HAP-1 (cell line): ENCODE measurements at regions of chr2 and their contacts with region 1.

Region 1: DNA sequence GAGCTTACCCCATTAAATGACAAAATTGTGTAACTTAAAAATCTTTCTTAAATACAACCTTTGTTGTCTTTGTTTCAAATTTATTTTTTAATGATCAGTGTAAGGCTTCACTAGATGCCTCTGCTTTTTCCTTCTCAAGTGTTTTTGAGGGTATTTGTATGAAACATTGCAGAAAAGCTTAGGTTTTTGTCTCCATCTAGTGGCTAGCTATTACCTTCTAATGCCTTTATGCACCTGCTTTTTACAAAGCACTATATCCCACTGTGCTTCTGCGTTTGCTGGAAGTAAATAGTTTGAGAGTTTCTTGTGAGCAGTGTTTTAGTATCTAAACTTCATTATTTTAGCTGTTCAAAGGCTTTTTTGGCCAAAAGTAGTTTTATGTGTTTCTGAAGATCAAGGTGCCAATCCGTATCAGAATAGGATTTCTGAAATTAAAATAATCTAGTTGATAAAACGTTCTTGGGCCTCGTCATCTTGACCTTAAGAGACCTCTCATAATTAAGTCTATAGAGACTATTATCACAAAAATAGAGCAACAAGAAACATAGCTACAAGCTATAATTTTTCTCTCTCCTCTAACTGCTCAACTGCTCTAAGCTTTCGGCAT is 47.0 kb downstream of the IWS1 start:
- DNase-seq: peak in 1 of 2 experiments; percentile 74
- H3K4me3 ChIP-seq: no peak overlapping the region
- H3K4me1 ChIP-seq: peaks cover 17% of the 10 kb centered on the region
- H3K27me3 ChIP-seq: no peaks in the 10 kb centered on the region

Region 2: GRCh38 chr2:127208313-127208712 is 271.0 kb before region 1 on chr2:
- in situ Hi-C with region 1: loop called (anchors 10 kb)
- DNase-seq: peak in 1 of 2 experiments; percentile 66
- H3K4me3 ChIP-seq: no peak overlapping the region
- H3K4me1 ChIP-seq: no peaks in the 10 kb centered on the region; the same call in 1 of the 2 replicates
- H3K27me3 ChIP-seq: no peaks in the 10 kb centered on the region